ENCODE measurements at regions of chr16 and their contacts with region 1.

Region 1: GRCh38 chr16:23182460-23183309 is at the start of gene SCNN1G:
- DNase-seq: peak; percentile 63 to 76
- ATAC-seq: peak; percentile 92 to 97 (median 96)
- H3K4me3 ChIP-seq: peak within 1 kb of the TSS; percentile 27 to 55 (median 44)
- H3K27ac ChIP-seq: no peak within 1 kb of the TSS
- H3K4me1 ChIP-seq: peaks cover 7 to 26% (median 17%) of the 10 kb centered on the region in 9 donors
- H3K27me3 ChIP-seq: peaks cover 0 to 64% (median 54%) of the 10 kb centered on the region in 7 donors
- CTCF ChIP-seq: peak; percentile 22 to 97 (median 91)
- total RNA-seq, gene SCNN1G: 0.05 to 0.30 (median 0.12) TPM in 3 of 10 donors, not detected in the others

Region 2: DNA sequence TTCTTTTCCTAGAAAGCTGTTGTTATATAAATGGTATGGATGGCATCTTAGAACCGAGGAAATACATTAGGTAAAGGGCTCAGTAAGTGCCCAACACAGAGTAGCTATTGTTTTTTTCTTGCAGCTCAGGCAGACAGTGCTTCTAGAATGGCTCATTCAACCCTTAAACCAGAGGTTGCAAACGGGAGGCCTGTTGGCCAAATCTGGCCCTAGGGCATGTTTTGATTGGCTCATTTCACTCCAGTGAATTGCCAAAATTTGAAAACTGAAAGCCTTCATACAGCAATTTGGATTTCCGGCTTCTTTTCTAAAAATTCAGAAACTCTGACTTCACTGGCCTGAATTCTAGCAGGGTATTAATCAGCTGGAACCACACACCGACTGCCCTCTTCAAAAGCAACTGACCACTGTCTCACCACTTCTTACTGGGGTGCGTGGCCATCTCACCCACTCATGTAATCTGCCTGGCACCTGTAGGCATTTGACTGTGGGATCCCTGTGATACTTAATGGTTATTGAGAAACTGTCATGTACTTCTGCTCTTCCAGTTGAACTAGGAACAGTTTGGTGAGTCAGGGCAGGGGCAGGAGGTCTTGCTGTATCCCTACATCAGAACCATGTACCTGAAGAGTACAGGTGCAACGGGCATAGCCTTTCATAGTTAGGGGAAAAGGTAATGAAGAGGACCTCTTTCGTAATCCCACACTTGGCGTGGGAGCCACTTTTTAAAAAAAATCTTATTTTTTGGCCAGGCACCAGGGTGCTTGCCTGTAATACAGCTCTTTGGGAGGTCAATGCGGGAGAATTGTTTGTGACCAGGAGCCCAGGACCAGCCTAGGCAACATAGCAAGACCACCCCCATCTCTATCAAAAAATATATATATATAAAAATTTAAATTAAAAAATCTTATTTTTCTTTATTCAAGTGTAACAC is 65.8 kb after region 1 on chr16:
- intact Hi-C with region 1: loop called in 1 of 10 experiments (anchors 10 kb)
- DNase-seq: no peak
- ATAC-seq: peak in 3 of 8 donors; percentile 6 to 47 (median 46)
- H3K4me3 ChIP-seq: no peak overlapping the region
- H3K27ac ChIP-seq: peak overlapping the region in 1 of 10 donors; percentile 17
- H3K4me1 ChIP-seq: peaks cover 0 to 9% (median 0%) of the 10 kb centered on the region in 9 donors
- H3K27me3 ChIP-seq: no peaks in the 10 kb centered on the region
- CTCF ChIP-seq: no peak

Region 3: DNA sequence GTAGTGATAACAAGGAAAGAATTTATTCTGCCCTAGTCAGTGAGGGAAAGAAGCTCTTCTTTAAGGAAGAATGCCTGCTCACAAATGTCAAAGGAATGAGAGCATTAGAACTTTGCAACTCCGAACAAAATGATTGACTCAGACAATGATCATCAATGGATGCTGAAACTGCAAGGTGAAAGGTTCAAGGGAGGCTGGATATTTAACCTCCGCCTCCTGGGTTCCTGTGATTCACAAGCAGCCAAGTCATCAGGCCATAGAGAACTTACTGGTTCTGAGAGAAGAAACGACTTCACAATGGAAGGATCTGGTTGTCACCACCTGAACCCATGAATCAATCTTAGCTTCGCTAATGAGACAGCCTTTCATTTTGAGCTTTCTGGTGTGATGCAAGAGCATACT is 103.4 kb after region 1 on chr16:
- intact Hi-C with region 1: loop called in 1 of 10 experiments (anchors 10 kb)
- DNase-seq: no peak
- ATAC-seq: no peak
- H3K4me3 ChIP-seq: no peak overlapping the region
- H3K27ac ChIP-seq: no peak overlapping the region
- H3K4me1 ChIP-seq: no peaks in the 10 kb centered on the region
- H3K27me3 ChIP-seq: peaks cover 0 to 38% (median 15%) of the 10 kb centered on the region in 7 donors
- CTCF ChIP-seq: no peak

Region 4: DNA sequence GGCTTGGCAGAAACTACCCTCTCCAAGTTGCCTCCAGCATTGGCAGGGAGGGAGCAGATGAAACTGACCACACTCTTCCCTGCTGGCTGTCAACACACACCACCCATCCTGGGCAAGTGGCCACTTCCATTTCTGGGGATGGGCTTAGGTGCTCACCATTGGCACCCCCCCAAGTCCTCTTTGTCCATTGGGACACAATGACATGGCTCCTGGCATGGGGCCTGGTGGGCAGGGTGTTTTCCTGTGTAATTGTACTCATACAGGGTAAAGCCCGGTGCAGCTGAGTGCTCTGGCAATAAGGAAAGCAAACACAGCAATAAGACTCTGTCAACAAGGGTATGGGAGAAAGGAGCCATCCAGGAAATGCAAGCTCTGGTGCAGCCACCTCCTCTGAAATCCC is 142.0 kb after region 1 on chr16:
- intact Hi-C with region 1: no loop called
- DNase-seq: peak; percentile 47 to 72
- ATAC-seq: peak in 5 of 8 donors; percentile 41 to 90 (median 80)
- H3K4me3 ChIP-seq: no peak overlapping the region
- H3K27ac ChIP-seq: no peak overlapping the region
- H3K4me1 ChIP-seq: peaks cover 0 to 10% (median 3%) of the 10 kb centered on the region in 9 donors
- H3K27me3 ChIP-seq: peaks cover 0 to 14% (median 0%) of the 10 kb centered on the region in 7 donors
- CTCF ChIP-seq: no peak

Measured in heart right ventricle (tissue), 16 donors.